ENCODE measurements at regions of chr10 and their contacts with region 1.

Region 1: DNA sequence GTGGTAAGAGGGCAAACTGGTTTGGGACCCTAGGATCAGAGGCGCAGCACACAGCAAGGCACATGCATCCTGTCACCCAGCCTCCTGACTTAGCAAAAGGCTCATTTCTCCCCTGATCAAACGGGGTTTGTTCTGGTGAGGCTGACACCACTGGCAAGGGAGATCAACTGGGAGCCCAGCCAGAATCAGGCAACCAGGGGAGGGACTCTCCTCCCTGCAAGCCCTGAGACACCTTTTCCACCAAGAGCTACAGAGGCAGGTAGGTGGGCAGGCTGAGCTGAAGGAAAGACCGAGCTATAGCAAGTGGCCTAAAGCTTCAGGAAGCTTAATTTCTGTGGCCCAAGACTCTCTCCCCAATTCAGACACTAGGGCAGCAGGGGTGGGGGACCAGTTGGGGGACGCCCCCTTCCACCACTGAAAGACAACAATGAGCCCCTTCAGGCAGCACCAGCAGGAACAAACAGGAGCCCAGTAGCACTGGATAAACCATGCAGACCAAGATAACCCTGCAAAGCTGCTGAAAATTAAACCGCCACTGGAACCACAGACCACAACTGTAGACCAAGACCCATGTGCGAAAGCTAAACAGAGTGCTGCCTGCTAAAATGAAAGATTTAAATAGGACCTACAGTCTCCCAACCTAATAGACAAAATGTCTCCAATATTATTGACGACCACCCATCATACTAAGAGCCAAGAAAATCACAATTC is 27.1 kb upstream of the SAR1A start:
- DNase-seq: peak in 4 of 9 experiments; percentile 29 to 58 (median 46)
- ATAC-seq: no peak
- H3K4me3 ChIP-seq: no peak overlapping the region
- H3K4me3 Mint-ChIP-seq: peak overlapping the region; percentile 33
- H3K27ac ChIP-seq: peak overlapping the region in 1 of 2 experiments; percentile 50
- H3K27ac Mint-ChIP-seq: peak overlapping the region; percentile 72
- H3K4me1 ChIP-seq: peaks cover 15% of the 10 kb centered on the region
- H3K4me1 Mint-ChIP-seq: peaks cover 31% of the 10 kb centered on the region
- H3K27me3 ChIP-seq: no peaks in the 10 kb centered on the region
- H3K27me3 Mint-ChIP-seq: no peaks in the 10 kb centered on the region
- CTCF ChIP-seq: no peak

Region 2: GRCh38 chr10:70162892-70163201 is 34.5 kb before region 1 on chr10:
- CTCF ChIA-PET with region 1: interaction called, 4 read pairs
- POLR2A ChIA-PET with region 1: no interaction called
- intact Hi-C with region 1: loop called (anchors 5 kb)
- DNase-seq: peak in 5 of 9 experiments; percentile 33 to 84 (median 65)
- ATAC-seq: peak; percentile 87
- H3K4me3 ChIP-seq: peak overlapping the region in 1 of 2 experiments; percentile 13
- H3K4me3 Mint-ChIP-seq: peak overlapping the region; percentile 65
- H3K27ac ChIP-seq: peak overlapping the region; percentile 2 to 80
- H3K27ac Mint-ChIP-seq: peak overlapping the region; percentile 74
- H3K4me1 ChIP-seq: peaks cover 61% of the 10 kb centered on the region
- H3K4me1 Mint-ChIP-seq: peaks cover 74% of the 10 kb centered on the region
- H3K27me3 ChIP-seq: no peaks in the 10 kb centered on the region
- H3K27me3 Mint-ChIP-seq: no peaks in the 10 kb centered on the region
- CTCF ChIP-seq: no peak